ENCODE measurements at regions of chr22 and their contacts with region 1.

Region 1: GRCh38 chr22:23119494-23120414 is 22.0 kb downstream of the RSPH14 start:
- DNase-seq: peak; percentile 27 to 91 (median 51)
- ATAC-seq: peak; percentile 98
- H3K4me3 ChIP-seq: peak overlapping the region; percentile 0
- H3K4me3 Mint-ChIP-seq: no peak overlapping the region
- H3K27ac ChIP-seq: peak overlapping the region; percentile 37 to 78
- H3K27ac Mint-ChIP-seq: peak overlapping the region; percentile 93
- H3K4me1 ChIP-seq: peaks cover 21% of the 10 kb centered on the region
- H3K4me1 Mint-ChIP-seq: peaks cover 12% of the 10 kb centered on the region
- H3K27me3 ChIP-seq: no peaks in the 10 kb centered on the region
- H3K27me3 Mint-ChIP-seq: no peaks in the 10 kb centered on the region
- CTCF ChIP-seq: no peak

Region 2: GRCh38 chr22:23075525-23076216 is 44.1 kb before region 1 on chr22:
- CTCF ChIA-PET with region 1: no interaction called
- POLR2A ChIA-PET with region 1: no interaction called
- intact Hi-C with region 1: loop called in 1 of 2 experiments (anchors 5 kb)
- DNase-seq: no peak
- ATAC-seq: no peak
- H3K4me3 ChIP-seq: no peak overlapping the region
- H3K4me3 Mint-ChIP-seq: no peak overlapping the region
- H3K27ac ChIP-seq: no peak overlapping the region
- H3K27ac Mint-ChIP-seq: no peak overlapping the region
- H3K4me1 ChIP-seq: peaks cover 11% of the 10 kb centered on the region
- H3K4me1 Mint-ChIP-seq: peaks cover 8% of the 10 kb centered on the region
- H3K27me3 ChIP-seq: peaks cover 0 to 11% of the 10 kb centered on the region in 2 experiments
- H3K27me3 Mint-ChIP-seq: peaks cover 22% of the 10 kb centered on the region
- CTCF ChIP-seq: no peak

Region 3: DNA sequence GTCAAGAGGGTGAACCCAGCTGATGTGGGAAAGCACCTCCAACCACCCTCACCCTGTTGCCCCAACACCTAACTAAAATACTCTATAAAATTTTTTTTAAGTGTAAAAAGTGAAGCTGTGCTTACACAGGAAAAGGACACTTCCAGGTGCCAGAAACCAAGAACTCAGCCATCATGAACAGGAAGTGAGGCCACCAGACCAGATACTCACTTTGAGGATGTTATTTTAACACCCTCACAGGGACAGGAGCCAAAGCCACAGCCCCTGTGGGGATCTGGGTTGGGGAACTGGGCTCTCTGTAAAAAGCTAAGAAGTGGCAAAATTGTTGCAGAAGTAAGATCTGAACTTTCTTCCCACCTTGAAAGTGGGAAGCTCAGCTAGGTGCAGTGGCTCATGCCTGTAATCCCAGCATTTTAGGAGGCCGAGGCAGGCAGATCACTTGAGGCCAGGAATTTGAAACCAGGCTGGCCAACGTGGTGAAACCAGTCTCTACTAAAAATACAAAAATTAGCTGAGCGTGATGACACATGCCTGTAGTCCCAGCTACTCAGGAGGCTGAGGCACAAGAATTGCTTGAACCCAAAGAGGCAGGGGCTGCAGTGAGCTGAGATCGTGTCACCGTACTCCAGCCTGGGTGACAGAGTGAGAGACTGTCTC is 18.3 kb after region 1 on chr22:
- CTCF ChIA-PET with region 1: no interaction called
- POLR2A ChIA-PET with region 1: interaction called, 11 read pairs
- intact Hi-C with region 1: no loop called
- DNase-seq: peak in 11 of 14 experiments; percentile 19 to 90 (median 35)
- ATAC-seq: peak; percentile 21
- H3K4me3 ChIP-seq: no peak overlapping the region
- H3K4me3 Mint-ChIP-seq: peak overlapping the region; percentile 78
- H3K27ac ChIP-seq: peak overlapping the region; percentile 66 to 86
- H3K27ac Mint-ChIP-seq: peak overlapping the region; percentile 94
- H3K4me1 ChIP-seq: peaks cover 67% of the 10 kb centered on the region
- H3K4me1 Mint-ChIP-seq: peaks cover 54% of the 10 kb centered on the region
- H3K27me3 ChIP-seq: no peaks in the 10 kb centered on the region
- H3K27me3 Mint-ChIP-seq: no peaks in the 10 kb centered on the region
- CTCF ChIP-seq: no peak

Region 4: DNA sequence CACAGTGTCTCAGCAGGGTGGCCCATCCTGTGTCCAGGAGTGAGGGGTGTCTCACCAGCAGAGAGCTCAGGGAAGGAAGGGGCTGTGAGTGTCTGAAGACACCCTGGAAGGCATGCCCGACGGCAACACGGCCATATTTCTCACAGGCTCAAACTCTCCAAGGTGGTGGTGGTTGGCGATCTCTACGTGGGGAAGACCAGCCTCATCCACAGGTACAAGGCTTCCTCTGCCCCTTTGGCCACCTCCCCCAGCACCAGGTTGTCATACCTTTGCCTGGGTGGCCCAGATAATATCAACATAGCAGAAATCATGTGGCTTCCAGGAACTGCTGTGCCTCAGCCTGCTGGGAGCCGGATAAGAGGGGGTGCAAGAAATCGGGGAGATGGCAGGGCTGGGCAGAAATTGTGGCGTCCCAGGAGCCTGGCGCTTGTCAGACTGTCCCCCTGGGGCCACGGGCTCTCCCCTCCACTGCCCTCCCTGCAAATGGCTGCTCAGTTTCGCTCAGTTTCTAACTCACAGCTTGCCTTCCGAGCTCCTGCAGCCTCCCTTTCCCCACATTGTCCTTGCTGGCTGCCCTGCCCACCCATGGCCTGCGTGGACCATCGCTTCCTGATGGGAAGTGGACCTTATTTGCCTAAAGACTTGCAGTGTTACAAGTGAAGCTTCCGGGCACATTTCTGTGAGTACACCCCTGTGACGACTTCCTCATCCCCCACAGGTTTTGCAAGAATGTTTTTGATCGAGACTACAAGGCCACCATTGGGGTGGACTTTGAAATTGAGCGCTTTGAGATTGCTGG is 32.8 kb after region 1 on chr22:
- CTCF ChIA-PET with region 1: no interaction called
- POLR2A ChIA-PET with region 1: no interaction called
- intact Hi-C with region 1: no loop called
- DNase-seq: no peak
- ATAC-seq: no peak
- H3K4me3 ChIP-seq: no peak overlapping the region
- H3K4me3 Mint-ChIP-seq: no peak overlapping the region
- H3K27ac ChIP-seq: no peak overlapping the region
- H3K27ac Mint-ChIP-seq: no peak overlapping the region
- H3K4me1 ChIP-seq: peaks cover 23% of the 10 kb centered on the region
- H3K4me1 Mint-ChIP-seq: peaks cover 11% of the 10 kb centered on the region
- H3K27me3 ChIP-seq: no peaks in the 10 kb centered on the region
- H3K27me3 Mint-ChIP-seq: no peaks in the 10 kb centered on the region
- CTCF ChIP-seq: no peak

Region 5: DNA sequence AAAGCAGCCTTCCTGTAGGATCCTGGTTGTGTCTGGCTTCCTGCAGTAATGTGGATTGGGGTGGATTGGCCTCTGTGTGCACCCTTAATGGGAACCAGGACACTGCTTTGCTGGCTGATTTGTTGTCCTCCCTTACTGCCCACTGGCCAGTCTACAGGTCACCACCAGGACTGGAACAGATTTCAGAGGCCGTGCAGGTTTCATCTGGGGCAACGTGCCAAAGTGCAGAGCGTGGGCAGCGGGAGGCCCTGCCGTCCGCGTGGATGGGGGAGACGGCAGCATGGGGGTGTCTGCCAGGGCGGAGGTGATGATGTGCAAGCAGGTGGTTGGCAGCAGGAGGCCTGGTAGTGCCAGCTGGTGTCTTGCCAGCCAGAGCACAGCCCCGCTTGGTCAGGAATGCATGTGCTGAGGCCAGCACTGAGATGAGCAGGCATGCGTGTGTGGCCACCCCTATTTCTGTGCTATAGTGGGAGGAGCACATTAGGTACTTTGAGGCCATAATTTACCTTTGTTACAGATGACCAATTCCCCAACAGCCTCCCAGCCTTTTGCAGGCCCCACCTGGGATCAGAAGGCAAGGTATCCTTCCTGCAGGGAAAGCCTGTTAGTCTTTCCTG is 84.9 kb after region 1 on chr22:
- CTCF ChIA-PET with region 1: no interaction called
- POLR2A ChIA-PET with region 1: no interaction called
- intact Hi-C with region 1: no loop called
- DNase-seq: no peak
- ATAC-seq: no peak
- H3K4me3 ChIP-seq: no peak overlapping the region
- H3K4me3 Mint-ChIP-seq: no peak overlapping the region
- H3K27ac ChIP-seq: no peak overlapping the region
- H3K27ac Mint-ChIP-seq: no peak overlapping the region
- H3K4me1 ChIP-seq: peaks cover 12% of the 10 kb centered on the region
- H3K4me1 Mint-ChIP-seq: peaks cover 35% of the 10 kb centered on the region
- H3K27me3 ChIP-seq: no peaks in the 10 kb centered on the region
- H3K27me3 Mint-ChIP-seq: no peaks in the 10 kb centered on the region
- CTCF ChIP-seq: no peak

Measured in CD4-positive, alpha-beta T cell (primary cell).